Activated naive CD4-positive, alpha-beta T cell treated with anti-CD3 and anti-CD28 coated beads for 36 hours (primary cell): ENCODE measurements at regions of chr12 and their contacts with region 1.

Region 1: GRCh38 chr12:49945394-49946080 is 5.0 kb upstream of the AQP2 start:
- DNase-seq: peak; percentile 94
- H3K4me3 Mint-ChIP-seq: peak overlapping the region; percentile 74
- H3K27ac Mint-ChIP-seq: peak overlapping the region; percentile 83
- H3K4me1 Mint-ChIP-seq: peaks cover 16% of the 10 kb centered on the region
- H3K27me3 Mint-ChIP-seq: no peaks in the 10 kb centered on the region

Region 2: GRCh38 chr12:49866859-49867579 is 78.5 kb before region 1 on chr12:
- CTCF ChIA-PET with region 1: interaction called, 20 read pairs
- intact Hi-C with region 1: loop called (anchors 2 kb)
- DNase-seq: peak; percentile 86
- H3K4me3 Mint-ChIP-seq: no peak overlapping the region
- H3K27ac Mint-ChIP-seq: no peak overlapping the region
- H3K4me1 Mint-ChIP-seq: no peaks in the 10 kb centered on the region
- H3K27me3 Mint-ChIP-seq: no peaks in the 10 kb centered on the region

Region 3: GRCh38 chr12:49880756-49881414 is 64.7 kb before region 1 on chr12:
- CTCF ChIA-PET with region 1: no interaction called
- intact Hi-C with region 1: no loop called
- DNase-seq: no peak
- H3K4me3 Mint-ChIP-seq: no peak overlapping the region
- H3K27ac Mint-ChIP-seq: no peak overlapping the region
- H3K4me1 Mint-ChIP-seq: no peaks in the 10 kb centered on the region
- H3K27me3 Mint-ChIP-seq: no peaks in the 10 kb centered on the region

Region 4: DNA sequence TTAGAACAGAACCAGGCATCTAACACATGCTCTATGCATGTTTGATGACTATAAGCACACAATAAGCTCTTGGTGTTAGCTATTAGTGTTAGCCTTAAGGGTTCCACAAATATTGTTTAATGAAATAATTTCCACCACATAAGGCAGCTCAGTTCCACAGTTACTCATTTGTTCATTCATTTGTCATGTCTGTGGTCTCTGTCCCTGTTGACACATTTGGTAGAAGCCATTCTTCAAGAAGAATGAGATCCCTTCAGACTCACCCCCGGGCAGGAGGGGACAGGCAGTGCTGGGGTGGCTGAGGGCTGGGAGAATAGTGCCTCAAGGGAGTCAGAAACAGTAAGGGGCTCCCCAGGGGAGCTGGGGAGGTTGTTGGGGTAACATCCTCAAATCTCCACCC is 38.2 kb before region 1 on chr12:
- CTCF ChIA-PET with region 1: interaction called, 17 read pairs
- intact Hi-C with region 1: no loop called
- DNase-seq: no peak
- H3K4me3 Mint-ChIP-seq: no peak overlapping the region
- H3K27ac Mint-ChIP-seq: no peak overlapping the region
- H3K4me1 Mint-ChIP-seq: peaks cover 9% of the 10 kb centered on the region
- H3K27me3 Mint-ChIP-seq: no peaks in the 10 kb centered on the region

Region 5: DNA sequence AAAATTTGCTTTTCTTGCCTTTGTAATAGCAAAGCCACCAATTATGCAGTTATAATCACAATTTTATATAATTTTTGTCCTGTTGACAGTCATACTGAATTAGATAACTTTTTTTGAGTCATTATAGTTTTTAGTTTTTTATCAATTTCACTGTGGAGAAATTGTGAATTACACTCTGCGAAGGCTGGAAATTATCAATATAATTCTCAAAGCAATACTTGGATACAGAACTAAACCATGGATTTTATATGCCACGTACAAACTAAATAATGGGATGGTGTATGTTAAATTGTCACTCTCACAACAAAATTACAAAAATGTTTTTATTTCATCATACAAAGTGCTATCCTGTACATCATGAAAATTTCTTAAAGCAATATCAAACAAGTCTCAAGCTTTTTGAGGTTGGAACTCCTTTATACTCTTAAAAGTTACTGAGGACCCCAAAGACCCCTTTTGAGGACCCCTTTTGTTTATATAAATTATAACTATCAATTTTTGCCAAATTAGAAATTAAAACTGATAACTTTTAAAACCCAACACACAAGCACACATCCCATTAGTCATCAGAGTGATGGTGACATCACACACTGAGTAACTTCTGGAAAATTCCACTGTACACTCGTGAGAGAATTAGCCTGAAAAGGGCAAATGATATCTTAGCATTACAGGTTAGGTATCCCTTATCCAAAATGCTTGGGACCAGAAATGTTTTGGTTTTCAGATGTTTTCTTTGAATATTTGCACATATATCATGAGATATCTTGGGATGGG is 14.8 kb before region 1 on chr12:
- CTCF ChIA-PET with region 1: interaction called, 18 read pairs
- intact Hi-C with region 1: no loop called
- DNase-seq: peak; percentile 19
- H3K4me3 Mint-ChIP-seq: no peak overlapping the region
- H3K27ac Mint-ChIP-seq: no peak overlapping the region
- H3K4me1 Mint-ChIP-seq: peaks cover 7% of the 10 kb centered on the region
- H3K27me3 Mint-ChIP-seq: peaks cover 1% of the 10 kb centered on the region

Region 6: DNA sequence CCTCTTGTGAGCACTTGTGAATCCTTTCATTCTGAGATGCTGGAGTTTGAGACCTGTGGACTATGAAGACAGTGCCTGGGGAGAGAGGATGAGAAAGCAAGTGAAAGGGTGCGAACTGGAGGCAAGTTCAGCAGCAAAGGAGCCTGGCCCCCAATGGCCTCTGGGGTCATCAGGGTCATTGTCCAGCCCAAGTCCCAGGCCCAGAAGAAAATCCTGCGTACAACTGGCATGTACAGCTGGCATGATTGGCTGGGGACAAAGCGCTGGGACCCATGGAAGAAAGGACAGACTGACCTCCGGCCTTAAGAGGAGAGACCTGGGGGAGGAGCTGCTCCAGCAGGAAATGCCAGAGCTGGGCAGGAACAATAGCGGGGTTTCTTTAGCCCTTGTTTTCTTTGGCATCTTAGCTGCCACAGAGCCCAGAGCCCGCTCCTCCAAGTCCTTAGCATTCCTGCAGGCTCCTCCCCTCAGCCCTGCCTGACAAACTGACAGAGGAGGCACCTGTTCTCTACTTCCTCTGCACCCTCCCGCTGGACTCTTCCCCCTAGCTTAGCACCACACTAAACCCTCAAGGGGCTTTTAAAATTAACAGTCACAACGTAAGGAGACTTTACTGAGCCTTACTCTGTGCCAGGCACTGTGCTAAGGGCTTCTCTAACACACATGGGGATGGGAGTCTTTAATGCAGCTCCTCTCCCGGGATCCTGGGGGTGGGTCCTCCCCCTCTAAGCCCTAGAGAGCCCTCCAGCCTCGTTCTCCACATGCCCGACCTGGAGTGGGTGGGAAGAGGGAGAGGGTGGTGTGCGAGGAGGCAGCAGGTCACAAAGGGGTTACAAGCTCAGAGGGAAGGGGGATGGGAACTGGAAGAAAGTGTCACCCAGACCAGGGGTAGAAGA is 14.3 kb after region 1 on chr12:
- CTCF ChIA-PET with region 1: interaction called, 65 read pairs
- intact Hi-C with region 1: no loop called
- DNase-seq: no peak
- H3K4me3 Mint-ChIP-seq: no peak overlapping the region
- H3K27ac Mint-ChIP-seq: no peak overlapping the region
- H3K4me1 Mint-ChIP-seq: peaks cover 7% of the 10 kb centered on the region
- H3K27me3 Mint-ChIP-seq: peaks cover 61% of the 10 kb centered on the region

Region 7: DNA sequence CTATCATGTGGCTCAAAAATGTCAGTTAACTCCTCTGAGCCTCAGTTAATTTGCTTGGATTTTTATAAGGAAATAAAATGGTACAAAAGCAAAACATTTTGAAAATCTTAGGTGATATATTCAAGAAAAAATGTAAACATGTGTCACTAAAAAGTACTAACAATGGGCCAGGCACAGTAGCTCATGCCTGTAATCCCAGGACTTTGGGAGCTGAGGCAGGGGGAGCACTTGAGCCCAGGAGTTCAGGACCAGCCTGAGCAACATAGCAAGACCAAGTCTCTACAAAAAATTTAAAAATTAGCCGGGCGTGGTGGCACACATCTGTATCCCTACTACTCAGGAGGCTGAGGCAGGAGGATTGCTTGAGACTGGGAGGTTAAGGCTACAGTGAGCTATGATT is 52.9 kb after region 1 on chr12:
- CTCF ChIA-PET with region 1: no interaction called
- intact Hi-C with region 1: no loop called
- DNase-seq: no peak
- H3K4me3 Mint-ChIP-seq: no peak overlapping the region
- H3K27ac Mint-ChIP-seq: no peak overlapping the region
- H3K4me1 Mint-ChIP-seq: no peaks in the 10 kb centered on the region
- H3K27me3 Mint-ChIP-seq: no peaks in the 10 kb centered on the region

Region 8: GRCh38 chr12:50038336-50038735 is 92.8 kb after region 1 on chr12:
- CTCF ChIA-PET with region 1: interaction called, 16 read pairs
- intact Hi-C with region 1: no loop called
- DNase-seq: no peak
- H3K4me3 Mint-ChIP-seq: no peak overlapping the region
- H3K27ac Mint-ChIP-seq: no peak overlapping the region
- H3K4me1 Mint-ChIP-seq: peaks cover 5% of the 10 kb centered on the region
- H3K27me3 Mint-ChIP-seq: peaks cover 9% of the 10 kb centered on the region